H1 (cell line): ENCODE measurements at regions of chr4 and their contacts with region 1.

Region 1: GRCh38 chr4:83272900-83273299 is 11.7 kb downstream of the COQ2 start:
- DNase-seq: no peak
- H3K4me3 ChIP-seq: no peak overlapping the region
- H3K27ac ChIP-seq: no peak overlapping the region
- H3K4me1 ChIP-seq: no peaks in the 10 kb centered on the region
- H3K27me3 ChIP-seq: no peaks in the 10 kb centered on the region
- CTCF ChIP-seq: no peak
- EP300 ChIP-seq: no peak
- POLR2A ChIP-seq: no peak
- RAD21 ChIP-seq: no peak

Region 2: DNA sequence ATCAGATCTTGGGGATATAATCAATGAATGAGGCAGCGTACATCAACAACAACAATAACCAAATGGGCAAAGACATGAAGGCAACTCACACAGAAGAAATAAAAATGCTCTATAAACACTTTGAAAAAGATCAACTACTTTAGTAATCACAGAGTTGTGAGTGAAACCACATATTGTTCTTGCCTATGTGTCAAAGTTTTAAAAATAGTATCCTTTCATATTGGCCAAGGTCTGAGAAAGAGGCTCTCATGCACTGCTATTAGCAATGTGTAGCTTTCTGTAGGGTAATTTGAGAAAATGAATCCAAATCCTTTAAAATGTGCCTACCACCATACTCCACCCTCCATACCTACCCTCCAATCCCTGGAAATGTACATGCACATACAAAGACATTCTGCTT is 13.3 kb before region 1 on chr4:
- CTCF ChIA-PET with region 1: interaction called, 18 read pairs
- POLR2A ChIA-PET with region 1: no interaction called
- DNase-seq: no peak
- H3K4me3 ChIP-seq: no peak overlapping the region
- H3K27ac ChIP-seq: no peak overlapping the region
- H3K4me1 ChIP-seq: no peaks in the 10 kb centered on the region
- H3K27me3 ChIP-seq: peaks cover 0 to 2% (median 0%) of the 10 kb centered on the region in 4 experiments; a peak in 1 of 7 replicates
- CTCF ChIP-seq: no peak
- EP300 ChIP-seq: no peak
- POLR2A ChIP-seq: no peak
- RAD21 ChIP-seq: no peak